PC-9 (cell line): ENCODE measurements at regions of chr4 and their contacts with region 1.

Region 1: GRCh38 chr4:38675146-38676121 is 11.4 kb downstream of the KLF3 start:
- DNase-seq: peak; percentile 71 to 73
- H3K4me3 ChIP-seq: peak overlapping the region; percentile 34; the same call in 1 of the 2 replicates
- H3K27ac ChIP-seq: peak overlapping the region; percentile 74
- H3K4me1 ChIP-seq: peaks cover 57% of the 10 kb centered on the region
- H3K27me3 ChIP-seq: no peaks in the 10 kb centered on the region
- CTCF ChIP-seq: peak; percentile 96

Region 2: GRCh38 chr4:38174801-38175200 is 500.6 kb before region 1 on chr4:
- CTCF ChIA-PET with region 1: interaction called, 13 read pairs
- POLR2A ChIA-PET with region 1: no interaction called
- intact Hi-C with region 1: loop called (anchors 1 kb)
- DNase-seq: no peak
- H3K4me3 ChIP-seq: no peak overlapping the region
- H3K27ac ChIP-seq: peak overlapping the region; percentile 51; the same call in 1 of the 2 replicates
- H3K4me1 ChIP-seq: peaks cover 21% of the 10 kb centered on the region
- H3K27me3 ChIP-seq: no peaks in the 10 kb centered on the region
- CTCF ChIP-seq: no peak

Region 3: DNA sequence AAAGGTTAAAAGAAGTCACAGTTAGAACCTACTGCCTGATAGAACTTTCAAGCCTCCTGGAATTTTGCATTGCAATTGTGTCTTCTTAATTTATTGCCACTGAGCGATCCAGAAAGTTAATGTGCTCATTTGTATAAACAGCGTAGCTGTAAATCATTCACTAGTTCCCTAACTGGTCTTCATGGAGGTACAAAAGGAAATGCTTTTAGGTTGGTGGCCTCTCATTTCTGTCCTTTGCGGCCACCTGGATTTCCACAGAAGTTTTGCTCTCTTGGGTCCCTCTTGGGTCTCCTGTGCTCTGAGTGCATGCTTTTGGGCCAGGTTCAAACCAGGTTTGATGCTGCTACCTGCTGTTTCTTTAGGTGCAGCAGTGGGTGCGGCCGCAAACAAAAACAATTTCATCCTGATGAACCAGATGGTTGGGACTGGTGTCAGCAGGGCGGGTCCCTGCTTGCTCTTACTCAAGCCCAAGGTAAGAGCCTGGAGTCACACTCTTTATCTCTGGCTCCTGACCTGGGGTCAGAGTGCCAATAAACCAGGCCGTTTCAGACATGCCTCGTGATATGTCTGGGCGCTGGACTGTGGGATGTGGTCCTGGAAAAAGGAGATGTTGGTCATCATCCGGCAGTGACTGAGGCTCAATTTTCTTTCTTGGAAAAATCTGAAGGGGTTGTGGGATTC is 445.2 kb before region 1 on chr4:
- CTCF ChIA-PET with region 1: no interaction called
- POLR2A ChIA-PET with region 1: no interaction called
- intact Hi-C with region 1: loop called (anchors 2 kb)
- DNase-seq: peak; percentile 73 to 95
- H3K4me3 ChIP-seq: peak overlapping the region; percentile 13; the same call in 1 of the 2 replicates
- H3K27ac ChIP-seq: peak overlapping the region; percentile 77
- H3K4me1 ChIP-seq: peaks cover 35% of the 10 kb centered on the region
- H3K27me3 ChIP-seq: no peaks in the 10 kb centered on the region
- CTCF ChIP-seq: no peak

Region 4: GRCh38 chr4:38371391-38371851 is 304.0 kb before region 1 on chr4:
- CTCF ChIA-PET with region 1: no interaction called
- POLR2A ChIA-PET with region 1: no interaction called
- intact Hi-C with region 1: loop called (anchors 5 kb)
- DNase-seq: no peak
- H3K4me3 ChIP-seq: no peak overlapping the region
- H3K27ac ChIP-seq: no peak overlapping the region
- H3K4me1 ChIP-seq: no peaks in the 10 kb centered on the region; the same call in 1 of the 2 replicates
- H3K27me3 ChIP-seq: no peaks in the 10 kb centered on the region
- CTCF ChIP-seq: no peak

Region 5: GRCh38 chr4:38730830-38731646 is 55.6 kb after region 1 on chr4:
- CTCF ChIA-PET with region 1: no interaction called
- POLR2A ChIA-PET with region 1: interaction called, 3 read pairs
- intact Hi-C with region 1: loop called (anchors 1 kb)
- DNase-seq: peak; percentile 74 to 87
- H3K4me3 ChIP-seq: no peak overlapping the region
- H3K27ac ChIP-seq: peak overlapping the region; percentile 13; the same call in 1 of the 2 replicates
- H3K4me1 ChIP-seq: peaks cover 35% of the 10 kb centered on the region
- H3K27me3 ChIP-seq: no peaks in the 10 kb centered on the region
- CTCF ChIP-seq: peak; percentile 94

Region 6: GRCh38 chr4:38867478-38868058 is 192.1 kb after region 1 on chr4 and contains the start of gene FAM114A1:
- CTCF ChIA-PET with region 1: no interaction called
- POLR2A ChIA-PET with region 1: no interaction called
- intact Hi-C with region 1: no loop called
- DNase-seq: peak; percentile 50 to 86
- H3K4me3 ChIP-seq: peak within 1 kb of the TSS; percentile 55
- H3K27ac ChIP-seq: peak within 1 kb of the TSS; percentile 41; the same call in 1 of the 2 replicates
- H3K4me1 ChIP-seq: peaks cover 23% of the 10 kb centered on the region
- H3K27me3 ChIP-seq: no peaks in the 10 kb centered on the region
- CTCF ChIP-seq: no peak
- total RNA-seq, gene FAM114A1: 73.7 and 80.4 TPM in 2 replicates